Activated B cell treated with CpG ODN at 0.5 μM for 24 hours (primary cell): ENCODE measurements at regions of chr18 and their contacts with region 1.

Region 1: GRCh38 chr18:70781860-70782453 is 493.1 kb downstream of the SOCS6 start:
- DNase-seq: no peak
- ATAC-seq: peak; percentile 49
- H3K4me3 Mint-ChIP-seq: no peak overlapping the region
- H3K27ac Mint-ChIP-seq: no peak overlapping the region
- H3K4me1 Mint-ChIP-seq: no peaks in the 10 kb centered on the region
- H3K27me3 Mint-ChIP-seq: no peaks in the 10 kb centered on the region
- CTCF ChIP-seq: no peak

Region 2: DNA sequence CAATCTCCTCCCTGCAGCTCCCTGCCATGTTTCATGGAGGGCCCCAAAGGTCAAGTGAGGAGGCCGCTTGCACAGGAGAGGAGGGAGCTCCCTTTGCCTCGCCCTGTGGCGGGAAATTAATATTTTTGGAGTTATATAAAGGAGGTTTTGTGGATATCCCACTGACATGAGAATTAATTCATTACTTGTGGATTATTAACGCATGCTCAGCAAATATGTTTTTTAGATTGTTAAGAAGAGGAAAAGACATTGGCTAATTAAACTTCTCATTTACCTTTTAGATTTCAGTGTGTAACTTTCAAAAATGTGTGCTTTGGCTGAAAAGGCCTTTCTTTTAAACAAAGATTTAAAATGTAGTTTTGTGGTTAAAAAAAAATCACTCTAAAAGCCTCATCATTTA is 19.1 kb before region 1 on chr18:
- CTCF ChIA-PET with region 1: no interaction called
- POLR2A ChIA-PET with region 1: no interaction called
- intact Hi-C with region 1: no loop called
- DNase-seq: no peak
- ATAC-seq: no peak
- H3K4me3 Mint-ChIP-seq: no peak overlapping the region
- H3K27ac Mint-ChIP-seq: no peak overlapping the region
- H3K4me1 Mint-ChIP-seq: no peaks in the 10 kb centered on the region
- H3K27me3 Mint-ChIP-seq: no peaks in the 10 kb centered on the region
- CTCF ChIP-seq: no peak

Region 3: GRCh38 chr18:71597219-71597618 is 815.3 kb after region 1 on chr18:
- CTCF ChIA-PET with region 1: no interaction called
- POLR2A ChIA-PET with region 1: no interaction called
- intact Hi-C with region 1: no loop called
- DNase-seq: no peak
- ATAC-seq: no peak
- H3K4me3 Mint-ChIP-seq: no peak overlapping the region
- H3K27ac Mint-ChIP-seq: no peak overlapping the region
- H3K4me1 Mint-ChIP-seq: no peaks in the 10 kb centered on the region
- H3K27me3 Mint-ChIP-seq: no peaks in the 10 kb centered on the region
- CTCF ChIP-seq: no peak

Region 4: GRCh38 chr18:72544092-72544886 is 1762.3 kb after region 1 on chr18 and contains the start of gene CBLN2:
- CTCF ChIA-PET with region 1: no interaction called
- POLR2A ChIA-PET with region 1: no interaction called
- intact Hi-C with region 1: loop called (anchors 5 kb)
- DNase-seq: peak; percentile 36
- ATAC-seq: peak; percentile 56
- H3K4me3 Mint-ChIP-seq: peak within 1 kb of the TSS; percentile 55
- H3K27ac Mint-ChIP-seq: no peak within 1 kb of the TSS
- H3K4me1 Mint-ChIP-seq: peaks cover 12% of the 10 kb centered on the region
- H3K27me3 Mint-ChIP-seq: peaks cover 35% of the 10 kb centered on the region
- CTCF ChIP-seq: no peak
- total RNA-seq, gene CBLN2: 0.09 TPM in 1 of 2 replicates, not detected in the other

Region 5: GRCh38 chr18:72672364-72673184 is 1890.6 kb after region 1 on chr18:
- CTCF ChIA-PET with region 1: no interaction called
- POLR2A ChIA-PET with region 1: no interaction called
- intact Hi-C with region 1: loop called (anchors 5 kb)
- DNase-seq: no peak
- ATAC-seq: no peak
- H3K4me3 Mint-ChIP-seq: no peak overlapping the region
- H3K27ac Mint-ChIP-seq: no peak overlapping the region
- H3K4me1 Mint-ChIP-seq: no peaks in the 10 kb centered on the region
- H3K27me3 Mint-ChIP-seq: peaks cover 2% of the 10 kb centered on the region
- CTCF ChIP-seq: peak; percentile 60